ENCODE measurements at regions of chr7 and their contacts with region 1.

Region 1: GRCh38 chr7:78558566-78558965 is 760.0 kb downstream of the PHTF2 start:
- DNase-seq: no peak
- ATAC-seq: no peak
- H3K4me3 ChIP-seq: no peak overlapping the region
- H3K4me3 Mint-ChIP-seq: no peak overlapping the region
- H3K27ac ChIP-seq: no peak overlapping the region
- H3K27ac Mint-ChIP-seq: no peak overlapping the region
- H3K4me1 ChIP-seq: no peaks in the 10 kb centered on the region
- H3K4me1 Mint-ChIP-seq: peaks cover 0 to 5% of the 10 kb centered on the region in 2 donors
- H3K27me3 ChIP-seq: no peaks in the 10 kb centered on the region
- H3K27me3 Mint-ChIP-seq: no peaks in the 10 kb centered on the region
- CTCF ChIP-seq: no peak

Region 2: DNA sequence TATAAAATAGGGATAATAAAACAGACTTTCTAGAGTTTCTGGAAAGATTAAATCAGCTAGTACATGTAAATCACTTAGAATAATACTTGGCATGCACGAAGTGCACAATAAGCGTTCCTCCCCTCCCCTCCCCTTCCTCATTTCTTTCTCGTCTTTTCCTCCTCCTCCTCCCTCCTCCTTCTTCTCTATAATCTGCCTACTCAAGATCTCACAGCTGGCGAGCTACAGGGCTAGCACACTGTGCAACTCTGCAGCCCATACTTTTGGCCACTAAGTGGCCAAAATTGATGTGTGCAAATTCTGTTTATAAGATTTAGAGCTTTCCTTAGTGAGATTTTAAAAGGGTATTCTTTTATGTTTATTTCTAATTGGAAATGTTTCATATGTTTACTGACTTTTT is 194.7 kb before region 1 on chr7:
- intact Hi-C with region 1: no loop called
- DNase-seq: no peak
- ATAC-seq: no peak
- H3K4me3 ChIP-seq: no peak overlapping the region
- H3K4me3 Mint-ChIP-seq: no peak overlapping the region
- H3K27ac ChIP-seq: no peak overlapping the region
- H3K27ac Mint-ChIP-seq: no peak overlapping the region
- H3K4me1 ChIP-seq: no peaks in the 10 kb centered on the region
- H3K4me1 Mint-ChIP-seq: no peaks in the 10 kb centered on the region
- H3K27me3 ChIP-seq: no peaks in the 10 kb centered on the region
- H3K27me3 Mint-ChIP-seq: no peaks in the 10 kb centered on the region
- CTCF ChIP-seq: no peak

Region 3: DNA sequence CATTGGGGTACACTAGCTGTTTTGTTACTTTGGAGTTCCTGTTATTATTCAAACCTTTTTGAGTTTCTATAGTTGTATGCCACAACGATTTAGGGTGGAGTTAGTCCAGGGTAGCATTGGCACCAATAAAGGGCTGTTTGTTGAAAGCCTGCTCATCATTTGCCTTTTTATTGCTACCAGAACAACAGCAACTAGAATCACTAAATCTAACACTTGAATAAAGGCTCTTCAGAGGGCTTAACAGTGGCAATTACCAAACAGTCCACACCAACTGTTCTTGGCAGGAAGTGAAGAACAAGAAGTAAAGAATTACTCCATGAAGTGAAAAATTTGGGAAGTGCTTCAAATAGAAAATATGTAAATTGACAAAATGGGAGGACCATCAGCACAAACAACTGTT is 138.6 kb before region 1 on chr7:
- intact Hi-C with region 1: no loop called
- DNase-seq: no peak
- ATAC-seq: no peak
- H3K4me3 ChIP-seq: no peak overlapping the region
- H3K4me3 Mint-ChIP-seq: no peak overlapping the region
- H3K27ac ChIP-seq: no peak overlapping the region
- H3K27ac Mint-ChIP-seq: no peak overlapping the region
- H3K4me1 ChIP-seq: no peaks in the 10 kb centered on the region
- H3K4me1 Mint-ChIP-seq: no peaks in the 10 kb centered on the region
- H3K27me3 ChIP-seq: no peaks in the 10 kb centered on the region
- H3K27me3 Mint-ChIP-seq: no peaks in the 10 kb centered on the region
- CTCF ChIP-seq: no peak

Region 4: GRCh38 chr7:78448911-78449310 is 109.7 kb before region 1 on chr7:
- intact Hi-C with region 1: no loop called
- DNase-seq: no peak
- ATAC-seq: no peak
- H3K4me3 ChIP-seq: no peak overlapping the region
- H3K4me3 Mint-ChIP-seq: no peak overlapping the region
- H3K27ac ChIP-seq: no peak overlapping the region
- H3K27ac Mint-ChIP-seq: no peak overlapping the region
- H3K4me1 ChIP-seq: no peaks in the 10 kb centered on the region
- H3K4me1 Mint-ChIP-seq: no peaks in the 10 kb centered on the region
- H3K27me3 ChIP-seq: no peaks in the 10 kb centered on the region
- H3K27me3 Mint-ChIP-seq: no peaks in the 10 kb centered on the region
- CTCF ChIP-seq: no peak

Region 5: GRCh38 chr7:78489476-78490240 is 68.9 kb before region 1 on chr7:
- intact Hi-C with region 1: loop called (anchors 10 kb)
- DNase-seq: no peak
- ATAC-seq: no peak
- H3K4me3 ChIP-seq: no peak overlapping the region
- H3K4me3 Mint-ChIP-seq: no peak overlapping the region
- H3K27ac ChIP-seq: no peak overlapping the region
- H3K27ac Mint-ChIP-seq: no peak overlapping the region
- H3K4me1 ChIP-seq: no peaks in the 10 kb centered on the region
- H3K4me1 Mint-ChIP-seq: no peaks in the 10 kb centered on the region
- H3K27me3 ChIP-seq: no peaks in the 10 kb centered on the region
- H3K27me3 Mint-ChIP-seq: no peaks in the 10 kb centered on the region
- CTCF ChIP-seq: no peak

Measured in natural killer cell (primary cell).